A673 (cell line): ENCODE measurements at regions of chr3 and their contacts with region 1.

Region 1: GRCh38 chr3:11680509-11680908 is 36.8 kb upstream of the VGLL4 start:
- DNase-seq: no peak
- H3K4me3 ChIP-seq: no peak overlapping the region
- H3K27ac ChIP-seq: no peak overlapping the region
- H3K4me1 ChIP-seq: no peaks in the 10 kb centered on the region
- H3K27me3 ChIP-seq: no peaks in the 10 kb centered on the region
- CTCF ChIP-seq: no peak

Region 2: DNA sequence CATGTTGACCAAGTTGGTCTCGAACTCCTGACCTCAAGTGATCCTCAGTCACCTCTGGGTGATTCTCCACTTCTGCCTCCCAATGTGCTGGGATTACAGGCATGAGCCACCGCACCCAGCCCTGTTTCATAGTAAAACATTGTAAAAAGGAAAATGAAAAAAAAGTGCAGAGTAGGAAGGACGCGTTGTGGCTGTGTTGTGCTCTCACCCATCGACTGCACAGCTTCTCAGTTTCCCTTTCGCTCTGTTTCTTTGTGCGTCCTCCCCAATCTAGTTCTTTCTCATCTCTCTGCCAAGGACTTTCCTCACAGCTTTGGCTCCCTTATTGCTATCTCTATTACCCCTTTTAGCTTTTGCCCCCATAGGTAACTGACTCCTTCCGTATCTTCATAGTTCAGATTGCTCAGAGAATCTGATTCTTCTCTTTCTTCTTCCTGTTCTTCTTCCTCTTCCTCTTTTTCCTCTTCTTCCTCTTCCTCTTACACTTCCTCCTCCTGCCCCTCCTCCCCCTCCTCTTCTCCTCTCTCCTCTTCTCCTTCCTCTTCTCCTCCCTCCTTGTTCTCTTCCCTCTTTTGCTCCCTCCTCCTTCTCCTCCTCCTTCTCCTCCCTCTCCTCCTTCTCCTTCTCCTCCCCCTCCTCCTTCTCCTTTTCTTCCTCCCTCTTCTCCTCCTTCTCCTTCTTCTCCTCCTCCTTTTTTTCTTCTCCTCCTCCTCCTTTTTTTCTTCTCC is 44.3 kb after region 1 on chr3:
- CTCF ChIA-PET with region 1: no interaction called
- POLR2A ChIA-PET with region 1: no interaction called
- intact Hi-C with region 1: loop called (anchors 2 kb)
- DNase-seq: no peak
- H3K4me3 ChIP-seq: no peak overlapping the region
- H3K27ac ChIP-seq: no peak overlapping the region
- H3K4me1 ChIP-seq: peaks cover 4% of the 10 kb centered on the region
- H3K27me3 ChIP-seq: peaks cover 10% of the 10 kb centered on the region
- CTCF ChIP-seq: no peak